Heart right ventricle (tissue), 16 donors: ENCODE measurements at regions of chr20 and their contacts with region 1.

Region 1: DNA sequence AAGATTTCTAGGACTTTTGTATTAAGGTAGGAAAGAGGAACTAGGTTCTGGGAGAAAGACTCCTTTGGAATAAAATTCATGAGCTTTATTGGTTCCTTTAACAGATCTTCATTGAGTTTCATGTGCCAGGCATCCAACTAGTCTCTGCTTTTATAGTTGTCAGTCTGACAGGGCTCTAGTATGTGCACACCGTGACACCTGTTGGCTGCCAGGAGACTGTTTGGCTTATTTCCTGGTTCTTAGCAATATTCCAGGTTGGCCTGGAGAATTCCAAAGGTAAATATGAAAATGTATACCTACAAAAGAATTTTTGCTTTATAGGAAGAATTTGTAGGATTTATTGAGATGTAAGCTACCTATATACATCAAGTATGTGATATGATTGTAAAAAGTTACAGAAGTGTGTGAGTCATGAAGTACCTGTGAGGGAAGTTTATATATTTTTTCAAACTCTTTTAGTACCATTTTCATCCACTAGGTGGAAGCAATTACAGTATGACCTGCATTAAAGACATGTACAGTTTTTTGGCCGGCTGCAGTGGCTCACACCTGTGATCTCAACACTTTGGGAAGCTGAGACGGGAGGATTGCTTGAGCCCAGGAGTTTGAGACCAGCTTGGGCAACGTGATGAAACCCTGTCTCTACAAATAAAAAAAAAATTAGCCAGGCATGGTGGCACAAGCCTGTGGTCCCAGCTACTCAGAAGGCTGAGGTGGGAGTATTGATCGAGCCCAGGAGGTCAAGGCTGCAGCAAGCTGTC is 35.2 kb downstream of the NDUFAF5 start:
- DNase-seq: peak in 1 of 2 donors; percentile 11
- ATAC-seq: peak in 7 of 8 donors; percentile 46 to 73 (median 68)
- H3K4me3 ChIP-seq: no peak overlapping the region
- H3K27ac ChIP-seq: no peak overlapping the region
- H3K4me1 ChIP-seq: peaks cover 0 to 3% (median 0%) of the 10 kb centered on the region in 9 donors
- H3K27me3 ChIP-seq: no peaks in the 10 kb centered on the region
- CTCF ChIP-seq: peak; percentile 45 to 72 (median 62)

Region 2: GRCh38 chr20:13947719-13948118 is 127.7 kb after region 1 on chr20:
- intact Hi-C with region 1: loop called in 2 of 10 experiments (anchors 10 kb)
- DNase-seq: no peak
- ATAC-seq: no peak
- H3K4me3 ChIP-seq: no peak overlapping the region
- H3K27ac ChIP-seq: no peak overlapping the region
- H3K4me1 ChIP-seq: no peaks in the 10 kb centered on the region
- H3K27me3 ChIP-seq: no peaks in the 10 kb centered on the region
- CTCF ChIP-seq: no peak

Region 3: DNA sequence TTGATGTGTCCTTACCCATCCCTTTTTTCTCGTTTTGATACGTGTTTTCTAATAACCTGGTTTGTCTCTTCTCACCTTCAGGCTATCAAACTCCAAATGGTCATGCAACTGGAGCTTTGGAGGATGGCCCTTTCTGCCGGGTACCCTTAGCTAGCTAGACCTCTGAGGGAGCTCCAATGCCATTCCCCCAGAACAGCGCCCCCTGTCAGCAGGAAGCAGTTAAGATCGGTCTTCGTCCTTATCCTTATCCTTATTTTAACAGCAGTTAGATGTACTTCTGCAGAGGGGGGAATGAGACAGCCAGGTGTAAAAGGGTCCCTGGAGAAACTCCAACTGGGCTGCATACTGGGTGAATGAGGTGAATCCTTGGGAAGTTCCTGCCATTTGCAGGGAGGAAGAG is 133.2 kb after region 1 on chr20:
- intact Hi-C with region 1: loop called in 2 of 10 experiments (anchors 10 kb)
- DNase-seq: no peak
- ATAC-seq: no peak
- H3K4me3 ChIP-seq: no peak overlapping the region
- H3K27ac ChIP-seq: no peak overlapping the region
- H3K4me1 ChIP-seq: no peaks in the 10 kb centered on the region
- H3K27me3 ChIP-seq: no peaks in the 10 kb centered on the region
- CTCF ChIP-seq: no peak

Region 4: DNA sequence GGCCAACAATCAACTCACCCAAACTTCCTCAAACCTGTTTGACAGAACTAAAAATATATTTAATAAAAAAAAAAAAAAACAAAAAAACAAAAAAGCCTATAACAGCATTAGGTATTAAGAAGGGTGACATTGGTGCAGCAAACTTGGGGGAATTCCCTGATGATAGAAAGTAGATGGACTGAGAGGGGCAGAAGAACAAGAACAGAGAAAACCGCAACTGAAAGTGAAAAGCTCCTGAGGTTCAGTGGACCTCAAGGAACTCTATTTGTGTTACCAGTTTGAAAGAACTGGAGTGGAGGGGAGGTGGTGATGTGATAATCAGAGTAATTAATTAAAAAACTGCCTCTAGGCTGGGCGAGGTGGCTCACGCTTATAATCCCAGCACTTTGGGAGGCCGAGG is 229.0 kb after region 1 on chr20:
- intact Hi-C with region 1: loop called in 8 of 10 experiments (anchors 2 to 5 kb)
- DNase-seq: no peak
- ATAC-seq: no peak
- H3K4me3 ChIP-seq: no peak overlapping the region
- H3K27ac ChIP-seq: no peak overlapping the region
- H3K4me1 ChIP-seq: no peaks in the 10 kb centered on the region
- H3K27me3 ChIP-seq: peaks cover 0 to 4% (median 0%) of the 10 kb centered on the region in 7 donors
- CTCF ChIP-seq: no peak

Region 5: GRCh38 chr20:14055127-14055742 is 235.2 kb after region 1 on chr20:
- intact Hi-C with region 1: loop called in 9 of 10 experiments (anchors 2 to 5 kb)
- DNase-seq: peak in 1 of 2 donors; percentile 30
- ATAC-seq: no peak
- H3K4me3 ChIP-seq: no peak overlapping the region
- H3K27ac ChIP-seq: no peak overlapping the region
- H3K4me1 ChIP-seq: no peaks in the 10 kb centered on the region
- H3K27me3 ChIP-seq: no peaks in the 10 kb centered on the region
- CTCF ChIP-seq: peak in 8 of 9 donors; percentile 31 to 75 (median 67)

Region 6: GRCh38 chr20:14062786-14063185 is 242.7 kb after region 1 on chr20:
- intact Hi-C with region 1: loop called in 2 of 10 experiments (anchors 5 kb)
- DNase-seq: no peak
- ATAC-seq: no peak
- H3K4me3 ChIP-seq: no peak overlapping the region
- H3K27ac ChIP-seq: no peak overlapping the region
- H3K4me1 ChIP-seq: no peaks in the 10 kb centered on the region
- H3K27me3 ChIP-seq: no peaks in the 10 kb centered on the region
- CTCF ChIP-seq: no peak